Pancreas (tissue), 10 donors: ENCODE measurements at regions of chr17 and their contacts with region 1.

Region 1: DNA sequence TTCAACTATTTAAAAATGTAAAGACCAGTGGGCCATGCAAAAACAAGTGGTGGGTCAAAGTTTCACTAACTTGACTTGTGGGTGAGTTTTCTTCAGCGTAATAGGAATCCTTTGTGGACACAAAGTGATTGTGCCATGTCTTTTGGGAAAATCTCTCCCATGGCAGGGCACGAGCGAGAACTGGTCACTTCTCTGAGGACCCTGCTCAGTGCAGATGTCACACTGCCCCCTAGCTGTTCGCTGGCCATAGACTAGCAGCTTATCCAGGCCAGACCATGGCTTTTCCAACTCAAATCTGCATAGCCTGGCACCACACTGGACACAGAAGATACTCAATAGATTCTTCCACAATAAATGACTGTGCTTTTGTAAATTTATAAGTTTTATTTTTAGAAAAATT is 306.0 kb upstream of the CCL2 start:
- DNase-seq: peak in 3 of 6 donors; percentile 25 to 45 (median 30)
- ATAC-seq: peak in 3 of 4 donors; percentile 45 to 72 (median 50)
- H3K4me3 ChIP-seq: no peak overlapping the region
- H3K27ac ChIP-seq: no peak overlapping the region
- H3K4me1 ChIP-seq: no peaks in the 10 kb centered on the region
- H3K27me3 ChIP-seq: no peaks in the 10 kb centered on the region
- CTCF ChIP-seq: no peak

Region 2: GRCh38 chr17:33786478-33786877 is 162.6 kb before region 1 on chr17:
- intact Hi-C with region 1: loop called in 1 of 3 experiments (anchors 10 kb)
- DNase-seq: no peak
- ATAC-seq: no peak
- H3K4me3 ChIP-seq: no peak overlapping the region
- H3K27ac ChIP-seq: no peak overlapping the region
- H3K4me1 ChIP-seq: no peaks in the 10 kb centered on the region
- H3K27me3 ChIP-seq: no peaks in the 10 kb centered on the region
- CTCF ChIP-seq: no peak